ENCODE measurements at regions of chr1 and their contacts with region 1.

Region 1: DNA sequence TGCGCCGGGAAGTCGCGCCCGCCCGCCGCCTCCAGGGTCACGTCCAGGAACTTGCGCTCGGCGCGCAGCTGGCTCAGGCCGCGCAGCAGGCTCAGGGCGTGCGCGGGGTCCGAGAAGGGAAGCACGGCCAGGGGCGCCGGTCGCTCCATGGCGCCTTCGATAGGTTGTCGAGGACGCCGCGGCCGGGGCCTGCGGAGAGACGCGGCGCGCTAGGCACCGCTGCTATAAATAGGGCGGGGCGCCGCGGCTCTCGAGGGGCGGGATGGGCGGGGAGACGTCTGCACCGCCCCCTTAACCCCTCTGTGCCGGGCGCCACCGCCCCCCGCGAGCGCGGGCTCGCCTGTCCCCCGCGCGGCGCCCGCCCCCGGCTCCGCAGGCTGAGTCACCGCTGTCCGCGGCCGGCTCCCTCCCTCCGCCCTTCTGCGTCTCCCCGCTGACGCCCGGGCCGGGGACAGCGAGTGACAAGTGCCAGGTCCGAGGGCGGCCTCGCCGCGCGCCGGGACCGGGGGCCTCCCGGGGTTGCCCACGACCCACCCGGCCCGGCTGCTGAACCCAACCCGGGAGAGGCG is at the start of gene KLHL21:
- DNase-seq: peak; percentile 70 to 93 (median 79)
- ATAC-seq: peak; percentile 82
- H3K4me3 ChIP-seq: peak within 1 kb of the TSS; percentile 98
- H3K4me3 Mint-ChIP-seq: peak within 1 kb of the TSS; percentile 89 to 99 (median 96)
- H3K27ac ChIP-seq: peak within 1 kb of the TSS; percentile 94
- H3K27ac Mint-ChIP-seq: peak within 1 kb of the TSS; percentile 95 to 99 (median 98)
- H3K4me1 ChIP-seq: peaks cover 28 to 30% of the 10 kb centered on the region in 2 donors
- H3K4me1 Mint-ChIP-seq: peaks cover 13 to 40% (median 34%) of the 10 kb centered on the region in 7 donors
- H3K27me3 ChIP-seq: no peaks in the 10 kb centered on the region
- H3K27me3 Mint-ChIP-seq: peaks cover 0 to 2% (median 0%) of the 10 kb centered on the region in 5 donors
- total RNA-seq, gene KLHL21: 25.2 to 58.1 (median 33.0) TPM

Region 2: DNA sequence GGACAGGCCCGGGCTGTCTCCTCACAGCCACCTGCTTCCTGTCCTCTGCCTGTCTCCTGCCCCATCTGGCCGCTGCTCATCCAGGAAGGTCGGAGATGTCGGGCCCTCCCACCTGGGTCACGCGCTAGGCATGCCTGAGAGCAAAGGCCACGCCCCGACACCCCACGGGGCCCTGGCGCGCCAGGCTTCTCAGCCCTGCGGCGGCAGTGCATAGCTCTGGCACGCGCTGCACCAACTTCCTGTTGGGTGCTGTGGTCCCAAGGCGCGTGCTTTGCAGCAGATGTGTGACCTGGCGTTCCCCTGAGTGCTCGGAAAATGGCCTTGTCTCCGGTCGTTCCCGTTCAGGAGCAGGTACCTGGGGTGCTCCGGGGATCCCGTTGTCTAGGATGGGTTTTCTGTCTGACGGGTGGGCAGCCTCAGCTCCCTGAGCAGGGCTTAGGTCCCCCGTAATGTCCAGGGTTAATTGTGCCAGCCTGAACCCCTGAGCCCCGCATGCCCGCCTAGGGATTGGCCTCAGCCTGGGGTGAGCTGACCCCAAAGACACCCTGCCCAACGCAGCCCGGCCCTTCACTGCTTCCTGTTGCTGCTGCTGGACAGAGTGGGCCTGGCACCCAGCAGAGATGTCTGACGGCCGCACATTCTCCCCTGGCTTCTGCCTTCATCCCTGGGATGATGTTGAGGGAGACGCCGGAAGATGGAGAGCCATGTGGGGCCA is 576.5 kb before region 1 on chr1:
- CTCF ChIA-PET with region 1: no interaction called
- POLR2A ChIA-PET with region 1: no interaction called
- intact Hi-C with region 1: loop called in 1 of 2 experiments (anchors 5 kb)
- DNase-seq: peak; percentile 82 to 92 (median 89)
- ATAC-seq: peak; percentile 92
- H3K4me3 ChIP-seq: peak overlapping the region; percentile 89
- H3K4me3 Mint-ChIP-seq: peak overlapping the region; percentile 88 to 99 (median 95)
- H3K27ac ChIP-seq: peak overlapping the region; percentile 84
- H3K27ac Mint-ChIP-seq: peak overlapping the region; percentile 87 to 98 (median 96)
- H3K4me1 ChIP-seq: peaks cover 42 to 49% of the 10 kb centered on the region in 2 donors
- H3K4me1 Mint-ChIP-seq: peaks cover 45 to 56% (median 51%) of the 10 kb centered on the region in 7 donors
- H3K27me3 ChIP-seq: no peaks in the 10 kb centered on the region
- H3K27me3 Mint-ChIP-seq: no peaks in the 10 kb centered on the region

Region 3: DNA sequence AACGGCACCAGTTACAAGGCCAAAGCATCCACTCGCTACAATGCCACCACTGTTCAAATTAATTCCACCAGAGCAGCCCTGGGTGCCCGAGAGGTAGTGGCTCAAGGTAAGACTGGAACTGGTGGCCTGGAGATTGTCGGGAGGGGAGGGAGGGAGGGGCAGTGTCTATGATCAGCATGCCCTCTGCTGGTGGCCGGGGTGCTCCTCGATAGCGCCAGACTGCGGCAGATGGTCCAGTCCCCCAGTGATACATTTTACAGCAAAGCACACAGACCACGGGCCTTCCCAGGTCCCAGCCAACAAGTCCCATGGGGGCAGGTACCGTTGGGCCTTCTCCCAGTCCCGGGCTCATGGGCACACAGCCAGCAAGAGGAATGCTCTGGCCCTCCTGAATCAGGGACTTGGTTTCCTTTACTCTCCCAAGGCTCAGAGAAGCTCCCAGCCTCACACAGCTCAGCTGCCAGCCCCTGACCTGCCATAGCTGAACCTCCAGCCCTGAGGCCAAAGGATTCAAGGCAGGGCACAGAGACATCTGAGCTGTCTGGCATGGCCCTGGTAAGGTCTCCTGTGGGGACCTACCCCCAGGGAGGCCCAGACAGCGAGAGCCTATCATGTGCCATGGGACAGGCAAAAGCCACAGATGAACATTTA is 224.5 kb before region 1 on chr1:
- CTCF ChIA-PET with region 1: no interaction called
- POLR2A ChIA-PET with region 1: no interaction called
- intact Hi-C with region 1: no loop called
- DNase-seq: no peak
- ATAC-seq: no peak
- H3K4me3 ChIP-seq: no peak overlapping the region
- H3K4me3 Mint-ChIP-seq: no peak overlapping the region
- H3K27ac ChIP-seq: no peak overlapping the region
- H3K27ac Mint-ChIP-seq: no peak overlapping the region
- H3K4me1 ChIP-seq: no peaks in the 10 kb centered on the region
- H3K4me1 Mint-ChIP-seq: no peaks in the 10 kb centered on the region
- H3K27me3 ChIP-seq: no peaks in the 10 kb centered on the region
- H3K27me3 Mint-ChIP-seq: no peaks in the 10 kb centered on the region

Region 4: GRCh38 chr1:6393400-6394187 is 209.2 kb before region 1 on chr1 and contains the start of gene ACOT7:
- CTCF ChIA-PET with region 1: no interaction called
- POLR2A ChIA-PET with region 1: no interaction called
- intact Hi-C with region 1: loop called in 1 of 2 experiments (anchors 5 kb)
- DNase-seq: peak; percentile 84 to 93 (median 89)
- ATAC-seq: peak; percentile 96
- H3K4me3 ChIP-seq: peak within 1 kb of the TSS; percentile 75
- H3K4me3 Mint-ChIP-seq: peak within 1 kb of the TSS; percentile 87 to 97 (median 90)
- H3K27ac ChIP-seq: peak within 1 kb of the TSS; percentile 88
- H3K27ac Mint-ChIP-seq: peak within 1 kb of the TSS; percentile 85 to 98 (median 95)
- H3K4me1 ChIP-seq: peaks cover 13 to 22% of the 10 kb centered on the region in 2 donors
- H3K4me1 Mint-ChIP-seq: peaks cover 16 to 47% (median 32%) of the 10 kb centered on the region in 7 donors
- H3K27me3 ChIP-seq: no peaks in the 10 kb centered on the region
- H3K27me3 Mint-ChIP-seq: peaks cover 0 to 5% (median 0%) of the 10 kb centered on the region in 5 donors
- total RNA-seq, gene ACOT7: 2.5 to 75.6 (median 3.4) TPM

Region 5: GRCh38 chr1:6554031-6554906 is 48.5 kb before region 1 on chr1 and contains the start of gene NOL9:
- CTCF ChIA-PET with region 1: interaction called, 17 read pairs
- POLR2A ChIA-PET with region 1: interaction called, 72 read pairs
- intact Hi-C with region 1: loop called (anchors 1 kb)
- DNase-seq: peak; percentile 90 to 97 (median 93)
- ATAC-seq: peak; percentile 100
- H3K4me3 ChIP-seq: peak within 1 kb of the TSS; percentile 79
- H3K4me3 Mint-ChIP-seq: peak within 1 kb of the TSS; percentile 77 to 85 (median 80)
- H3K27ac ChIP-seq: peak within 1 kb of the TSS; percentile 83
- H3K27ac Mint-ChIP-seq: peak within 1 kb of the TSS in 8 of 9 donors; percentile 60 to 85 (median 75)
- H3K4me1 ChIP-seq: peaks cover 8 to 20% of the 10 kb centered on the region in 2 donors
- H3K4me1 Mint-ChIP-seq: peaks cover 0 to 25% (median 17%) of the 10 kb centered on the region in 7 donors
- H3K27me3 ChIP-seq: no peaks in the 10 kb centered on the region
- H3K27me3 Mint-ChIP-seq: no peaks in the 10 kb centered on the region
- total RNA-seq, gene NOL9: 54.2 to 80.6 (median 73.8) TPM

Region 6: DNA sequence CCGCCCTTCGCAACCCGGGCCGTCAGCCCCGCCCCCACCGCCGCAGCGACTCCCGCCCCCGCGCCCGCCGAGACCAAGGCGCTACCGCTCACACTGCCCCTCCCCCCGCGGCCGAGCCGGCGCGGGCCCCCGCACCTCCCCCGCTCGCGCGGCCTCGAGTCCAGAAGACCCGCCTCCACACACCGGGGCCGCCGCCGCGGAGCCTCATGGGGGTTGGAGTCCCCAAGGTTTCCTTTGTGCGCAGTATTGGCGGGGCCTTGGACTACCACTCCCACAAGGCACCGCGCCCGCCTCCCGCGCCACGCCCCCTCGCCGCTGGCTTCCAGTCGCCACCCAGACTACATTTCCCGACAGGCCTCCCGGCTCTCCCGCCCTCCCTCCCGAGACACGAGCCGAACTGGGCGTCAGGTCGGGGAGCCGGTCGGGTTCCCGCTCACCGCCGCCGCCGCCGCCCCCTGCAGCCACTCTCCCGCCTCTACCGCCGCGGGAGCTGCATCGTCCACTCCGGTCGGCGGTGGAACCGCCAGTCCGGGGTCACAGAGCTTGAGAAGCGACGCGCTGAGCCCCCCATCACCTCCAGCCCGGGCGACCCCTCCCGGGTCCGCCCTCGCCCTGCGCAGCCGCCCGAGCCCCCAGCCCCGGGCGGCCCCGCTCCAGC is 10.7 kb after region 1 on chr1 and contains the start of gene PHF13:
- CTCF ChIA-PET with region 1: interaction called, 7 read pairs
- POLR2A ChIA-PET with region 1: interaction called, 246 read pairs
- intact Hi-C with region 1: loop called (anchors 1 kb)
- DNase-seq: peak; percentile 97 to 99 (median 98)
- ATAC-seq: peak; percentile 98
- H3K4me3 ChIP-seq: peak within 1 kb of the TSS; percentile 53
- H3K4me3 Mint-ChIP-seq: peak within 1 kb of the TSS; percentile 88 to 97 (median 93)
- H3K27ac ChIP-seq: peak within 1 kb of the TSS; percentile 82
- H3K27ac Mint-ChIP-seq: peak within 1 kb of the TSS; percentile 69 to 95 (median 88)
- H3K4me1 ChIP-seq: peaks cover 0 to 14% of the 10 kb centered on the region in 2 donors
- H3K4me1 Mint-ChIP-seq: peaks cover 16 to 37% (median 25%) of the 10 kb centered on the region in 7 donors
- H3K27me3 ChIP-seq: no peaks in the 10 kb centered on the region
- H3K27me3 Mint-ChIP-seq: peaks cover 0 to 2% (median 0%) of the 10 kb centered on the region in 5 donors
- total RNA-seq, gene PHF13: 7.7 to 14.3 (median 12.2) TPM

Region 7: GRCh38 chr1:6701437-6702153 is 98.8 kb after region 1 on chr1 and contains the start of gene DNAJC11:
- CTCF ChIA-PET with region 1: interaction called, 3 read pairs
- POLR2A ChIA-PET with region 1: interaction called, 5 read pairs
- intact Hi-C with region 1: loop called in 1 of 2 experiments (anchors 1 kb)
- DNase-seq: peak; percentile 84 to 99 (median 93)
- ATAC-seq: peak; percentile 99
- H3K4me3 ChIP-seq: peak within 1 kb of the TSS; percentile 90
- H3K4me3 Mint-ChIP-seq: peak within 1 kb of the TSS; percentile 87 to 96 (median 93)
- H3K27ac ChIP-seq: peak within 1 kb of the TSS; percentile 92
- H3K27ac Mint-ChIP-seq: peak within 1 kb of the TSS; percentile 77 to 95 (median 92)
- H3K4me1 ChIP-seq: peaks cover 8 to 9% of the 10 kb centered on the region in 2 donors
- H3K4me1 Mint-ChIP-seq: peaks cover 7 to 40% (median 32%) of the 10 kb centered on the region in 7 donors
- H3K27me3 ChIP-seq: no peaks in the 10 kb centered on the region
- H3K27me3 Mint-ChIP-seq: no peaks in the 10 kb centered on the region
- total RNA-seq, gene DNAJC11: 37.2 to 49.7 (median 44.0) TPM

Measured in naive thymus-derived CD4-positive, alpha-beta T cell (primary cell).